Endothelial cell of umbilical vein (primary cell): ENCODE measurements at regions of chr1 and their contacts with region 1.

Region 1: DNA sequence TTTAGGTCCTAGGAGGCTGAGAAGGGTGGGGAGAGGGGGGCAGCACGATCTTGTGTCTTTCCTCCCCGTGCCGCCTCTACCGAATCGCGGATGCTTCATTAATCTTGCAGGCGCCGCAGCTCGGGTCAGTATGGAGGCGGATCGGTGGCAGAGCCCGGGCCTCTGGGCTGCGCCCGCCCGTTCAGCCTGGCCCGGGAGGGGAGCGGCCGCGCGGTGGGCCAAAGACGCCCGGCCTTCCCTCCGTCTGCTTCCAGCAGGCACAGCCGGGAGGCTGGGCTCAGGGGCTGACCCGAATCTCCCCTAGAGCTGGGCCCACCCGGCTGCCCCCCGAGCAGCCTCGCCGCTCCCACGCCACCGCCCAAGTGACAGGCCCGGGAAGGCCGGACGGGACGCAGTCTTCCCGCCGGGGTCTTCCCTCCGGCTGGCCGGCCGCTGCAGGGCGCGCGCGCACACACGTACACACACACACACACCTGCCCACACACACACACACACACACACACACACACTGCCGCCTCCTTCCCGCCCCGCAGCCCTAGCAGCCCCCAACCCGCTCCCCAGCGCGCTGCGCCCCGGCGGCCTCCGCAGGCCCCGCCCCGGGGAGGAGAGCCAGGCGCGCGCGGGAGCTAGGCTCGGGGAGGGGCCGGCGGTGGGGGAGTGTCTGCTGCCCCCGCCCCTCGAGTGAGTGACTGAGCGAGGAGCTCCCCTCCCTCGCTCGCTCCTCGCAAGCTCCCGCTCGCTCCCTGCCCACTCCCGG is at the start of gene C1orf21:
- DNase-seq: peak; percentile 82
- H3K4me3 ChIP-seq: peak within 1 kb of the TSS; percentile 40 to 84 (median 66)
- H3K27ac ChIP-seq: no peak within 1 kb of the TSS
- H3K4me1 ChIP-seq: peaks cover 15% of the 10 kb centered on the region
- H3K27me3 ChIP-seq: peaks cover 10 to 20% of the 10 kb centered on the region in 2 experiments
- CTCF ChIP-seq: no peak
- POLR2A ChIP-seq: no peak
- total RNA-seq, gene C1orf21: 8.5 and 10.0 TPM in 2 replicates

Region 2: GRCh38 chr1:184152434-184152898 is 234.0 kb before region 1 on chr1:
- CTCF ChIA-PET with region 1: no interaction called
- POLR2A ChIA-PET with region 1: no interaction called
- dilution Hi-C with region 1: no loop called
- intact Hi-C with region 1: loop called (anchors 2 kb)
- DNase-seq: peak; percentile 93
- H3K4me3 ChIP-seq: peak overlapping the region; percentile 40 to 81 (median 74)
- H3K27ac ChIP-seq: peak overlapping the region; percentile 79
- H3K4me1 ChIP-seq: peaks cover 29% of the 10 kb centered on the region
- H3K27me3 ChIP-seq: peaks cover 0 to 3% of the 10 kb centered on the region in 2 experiments
- CTCF ChIP-seq: no peak
- POLR2A ChIP-seq: no peak

Region 3: DNA sequence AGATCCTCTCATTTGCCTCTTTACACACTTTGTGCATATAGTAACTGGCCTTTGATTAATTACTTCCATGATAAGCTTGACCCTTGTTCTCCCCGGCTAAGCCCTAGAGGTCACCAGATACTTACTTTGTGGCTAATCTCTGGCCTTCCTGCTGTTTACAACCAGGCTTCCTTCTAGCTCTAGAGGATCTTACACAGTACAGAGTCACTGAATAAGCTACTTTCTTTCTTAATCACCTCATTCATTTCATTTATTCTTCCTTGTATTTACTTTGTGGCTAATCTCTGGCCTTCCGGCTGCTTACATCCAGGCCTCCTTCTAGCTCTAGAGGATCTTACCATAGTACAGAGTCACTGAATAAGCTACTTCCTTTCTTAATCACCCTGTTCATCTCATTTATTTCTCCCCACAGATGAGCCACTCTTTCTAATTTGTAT is 144.0 kb before region 1 on chr1:
- CTCF ChIA-PET with region 1: interaction called, 6 read pairs
- POLR2A ChIA-PET with region 1: no interaction called
- dilution Hi-C with region 1: no loop called
- intact Hi-C with region 1: loop called (anchors 5 kb)
- DNase-seq: peak; percentile 69
- H3K4me3 ChIP-seq: no peak overlapping the region
- H3K27ac ChIP-seq: no peak overlapping the region
- H3K4me1 ChIP-seq: peaks cover 7% of the 10 kb centered on the region
- H3K27me3 ChIP-seq: peaks cover 19 to 48% of the 10 kb centered on the region in 2 experiments
- CTCF ChIP-seq: no peak
- POLR2A ChIP-seq: no peak

Region 4: GRCh38 chr1:184258525-184258924 is 128.0 kb before region 1 on chr1:
- CTCF ChIA-PET with region 1: interaction called, 3 read pairs
- POLR2A ChIA-PET with region 1: no interaction called
- dilution Hi-C with region 1: no loop called
- intact Hi-C with region 1: loop called (anchors 2 kb)
- DNase-seq: peak; percentile 43
- H3K4me3 ChIP-seq: no peak overlapping the region
- H3K27ac ChIP-seq: no peak overlapping the region
- H3K4me1 ChIP-seq: peaks cover 27% of the 10 kb centered on the region
- H3K27me3 ChIP-seq: no peaks in the 10 kb centered on the region
- CTCF ChIP-seq: no peak
- POLR2A ChIP-seq: no peak

Region 5: DNA sequence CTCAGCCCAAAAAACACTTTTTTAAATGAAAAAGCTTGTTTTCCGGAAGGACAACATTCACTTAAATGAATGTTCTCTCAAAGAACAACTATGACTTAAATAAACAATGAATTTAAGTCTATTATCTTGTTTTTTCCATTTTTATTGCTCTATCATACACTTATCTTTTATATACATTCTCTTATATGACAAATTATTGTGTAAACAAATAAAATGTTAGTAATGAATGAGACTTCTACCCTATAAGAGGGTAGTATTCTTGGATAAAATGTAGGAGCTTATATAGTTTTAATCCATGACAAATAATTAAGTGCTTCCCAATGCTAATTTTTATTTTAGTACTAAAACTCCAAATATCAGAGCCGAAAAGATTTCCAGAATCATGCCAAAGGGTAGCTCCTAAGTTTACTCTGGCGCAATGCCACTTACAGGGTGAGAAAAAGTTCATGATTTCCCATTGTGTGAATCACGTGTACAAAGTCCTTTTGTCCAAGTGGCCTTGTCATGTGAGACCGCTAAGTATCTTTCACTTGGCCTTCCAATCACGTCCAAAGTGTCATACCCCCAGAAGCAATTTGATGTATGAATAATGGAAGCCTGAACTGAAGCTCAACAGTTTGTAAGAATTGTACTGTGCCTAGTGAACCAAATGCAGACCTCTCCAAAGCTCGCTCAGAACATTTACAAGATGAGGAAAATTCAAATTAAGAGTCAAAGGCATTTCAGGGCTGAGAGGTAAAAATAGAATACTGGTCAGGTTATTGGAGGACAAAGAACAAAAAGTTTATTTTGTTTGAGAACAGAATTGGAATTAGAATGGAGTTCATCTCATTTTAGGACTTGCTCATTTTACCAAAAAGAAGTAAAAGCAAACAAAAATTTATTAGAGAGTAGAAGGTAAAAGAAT is 56.3 kb before region 1 on chr1:
- CTCF ChIA-PET with region 1: interaction called, 4 read pairs
- POLR2A ChIA-PET with region 1: no interaction called
- dilution Hi-C with region 1: no loop called
- intact Hi-C with region 1: loop called (anchors 1 kb)
- DNase-seq: peak; percentile 97
- H3K4me3 ChIP-seq: no peak overlapping the region
- H3K27ac ChIP-seq: no peak overlapping the region
- H3K4me1 ChIP-seq: peaks cover 22% of the 10 kb centered on the region
- H3K27me3 ChIP-seq: peaks cover 5 to 7% of the 10 kb centered on the region in 2 experiments
- CTCF ChIP-seq: no peak
- POLR2A ChIP-seq: no peak

Region 6: DNA sequence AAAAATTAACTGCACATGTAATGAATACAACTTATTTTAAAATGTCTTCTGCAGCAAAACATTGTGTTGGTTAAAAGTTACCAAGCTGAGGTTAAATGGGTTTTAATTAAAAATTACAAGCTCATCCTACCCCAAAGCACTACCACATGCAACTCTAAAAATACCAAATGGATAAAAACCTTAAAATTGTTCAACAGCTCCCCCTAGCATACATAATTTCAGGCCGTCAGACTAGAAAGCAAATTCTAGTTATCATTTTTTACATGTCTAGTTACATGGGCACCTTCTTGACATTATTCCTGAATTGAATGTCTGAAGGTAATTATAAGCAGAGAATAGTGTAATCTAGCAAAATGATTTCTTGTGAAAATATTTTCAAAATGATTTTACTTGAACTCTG is 176.8 kb after region 1 on chr1:
- CTCF ChIA-PET with region 1: interaction called, 4 read pairs
- POLR2A ChIA-PET with region 1: no interaction called
- dilution Hi-C with region 1: no loop called
- intact Hi-C with region 1: loop called (anchors 2 kb)
- DNase-seq: peak; percentile 62
- H3K4me3 ChIP-seq: no peak overlapping the region
- H3K27ac ChIP-seq: no peak overlapping the region
- H3K4me1 ChIP-seq: no peaks in the 10 kb centered on the region
- H3K27me3 ChIP-seq: peaks cover 0 to 2% of the 10 kb centered on the region in 2 experiments
- CTCF ChIP-seq: peak; percentile 36
- POLR2A ChIP-seq: no peak